ENCODE measurements at regions of chr7 and their contacts with region 1.

Region 1: GRCh38 chr7:121081327-121081936 is 92.9 kb downstream of the CPED1 start:
- DNase-seq: peak; percentile 67
- H3K4me3 ChIP-seq: no peak overlapping the region
- H3K27ac ChIP-seq: no peak overlapping the region
- H3K4me1 ChIP-seq: peaks cover 50% of the 10 kb centered on the region
- H3K27me3 ChIP-seq: no peaks in the 10 kb centered on the region
- CTCF ChIP-seq: peak; percentile 60 to 70

Region 2: DNA sequence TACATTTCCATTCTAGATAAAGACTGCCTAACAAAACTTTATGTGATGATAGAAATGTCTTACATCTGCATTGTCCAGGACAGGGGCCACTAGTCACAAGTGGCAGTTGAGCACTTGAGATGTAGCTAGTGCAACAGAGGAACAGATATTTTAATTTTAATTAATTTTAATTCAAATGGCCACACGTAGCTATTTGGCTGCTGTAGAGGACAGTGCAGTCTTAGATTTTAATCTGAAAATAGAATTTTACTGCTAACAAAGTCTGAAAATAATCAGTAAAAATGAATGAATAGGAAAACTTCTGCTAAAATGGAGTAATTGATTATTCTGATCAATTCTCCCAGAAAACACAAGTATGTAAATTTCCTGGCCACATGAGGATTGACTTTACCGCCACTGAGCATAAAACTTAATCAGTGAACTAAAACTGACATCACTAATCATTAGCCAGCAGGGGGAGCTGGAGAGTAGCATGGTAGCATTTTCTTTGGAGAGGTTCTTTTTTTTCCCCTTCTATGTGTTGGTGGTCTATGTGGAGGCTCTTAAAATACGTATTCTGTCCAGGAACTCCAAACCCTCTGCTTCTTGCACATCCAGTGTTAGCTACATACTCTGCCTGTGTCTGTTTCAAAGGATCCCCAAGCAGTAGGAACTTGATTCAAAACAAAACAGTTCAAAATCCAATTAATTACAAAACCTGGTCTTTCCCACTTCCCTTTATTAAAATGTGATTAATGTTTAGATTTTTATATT is 275.6 kb before region 1 on chr7:
- CTCF ChIA-PET with region 1: no interaction called
- dilution Hi-C with region 1: no loop called
- in situ Hi-C with region 1: no loop called
- intact Hi-C with region 1: loop called (anchors 1 kb)
- DNase-seq: peak; percentile 28
- H3K4me3 ChIP-seq: no peak overlapping the region
- H3K27ac ChIP-seq: no peak overlapping the region
- H3K4me1 ChIP-seq: no peaks in the 10 kb centered on the region
- H3K27me3 ChIP-seq: peaks cover 3% of the 10 kb centered on the region
- CTCF ChIP-seq: peak; percentile 84 to 85

Region 3: GRCh38 chr7:120996333-120996987 is 85.0 kb before region 1 on chr7:
- CTCF ChIA-PET with region 1: no interaction called
- dilution Hi-C with region 1: no loop called
- in situ Hi-C with region 1: loop called in 1 of 2 experiments (anchors 10 kb)
- intact Hi-C with region 1: no loop called
- DNase-seq: peak; percentile 79
- H3K4me3 ChIP-seq: no peak overlapping the region
- H3K27ac ChIP-seq: no peak overlapping the region
- H3K4me1 ChIP-seq: peaks cover 8% of the 10 kb centered on the region
- H3K27me3 ChIP-seq: no peaks in the 10 kb centered on the region
- CTCF ChIP-seq: no peak

Region 4: GRCh38 chr7:121102619-121103018 is 21.2 kb after region 1 on chr7:
- CTCF ChIA-PET with region 1: interaction called, 4 read pairs
- dilution Hi-C with region 1: no loop called
- in situ Hi-C with region 1: no loop called
- intact Hi-C with region 1: loop called (anchors 2 kb)
- DNase-seq: peak; percentile 62
- H3K4me3 ChIP-seq: no peak overlapping the region
- H3K27ac ChIP-seq: no peak overlapping the region
- H3K4me1 ChIP-seq: peaks cover 13% of the 10 kb centered on the region
- H3K27me3 ChIP-seq: no peaks in the 10 kb centered on the region
- CTCF ChIP-seq: no peak

Region 5: DNA sequence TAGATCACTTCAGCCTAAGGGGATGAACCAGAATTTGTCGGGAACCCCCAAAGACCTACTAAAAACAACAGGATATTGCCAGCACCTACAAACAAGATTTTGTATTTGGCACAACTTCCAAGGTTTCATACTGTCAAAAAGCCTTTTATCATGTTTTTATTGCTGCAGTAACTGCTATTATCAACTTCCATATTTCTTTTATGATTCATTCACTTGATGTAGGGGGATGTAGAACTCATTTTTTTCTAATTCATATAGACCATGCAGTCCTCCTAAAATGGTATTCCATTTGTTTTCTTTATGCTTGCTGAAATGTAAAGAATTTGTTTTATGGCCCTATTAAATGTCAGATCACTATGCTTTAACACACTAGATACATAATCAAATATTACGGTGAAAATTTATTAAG is 217.4 kb after region 1 on chr7:
- CTCF ChIA-PET with region 1: no interaction called
- dilution Hi-C with region 1: no loop called
- in situ Hi-C with region 1: no loop called
- intact Hi-C with region 1: no loop called
- DNase-seq: no peak
- H3K4me3 ChIP-seq: peak overlapping the region in 1 of 3 experiments; percentile 49
- H3K27ac ChIP-seq: no peak overlapping the region
- H3K4me1 ChIP-seq: peaks cover 12% of the 10 kb centered on the region
- H3K27me3 ChIP-seq: no peaks in the 10 kb centered on the region
- CTCF ChIP-seq: no peak